ENCODE measurements at regions of chr1 and their contacts with region 1.

Region 1: DNA sequence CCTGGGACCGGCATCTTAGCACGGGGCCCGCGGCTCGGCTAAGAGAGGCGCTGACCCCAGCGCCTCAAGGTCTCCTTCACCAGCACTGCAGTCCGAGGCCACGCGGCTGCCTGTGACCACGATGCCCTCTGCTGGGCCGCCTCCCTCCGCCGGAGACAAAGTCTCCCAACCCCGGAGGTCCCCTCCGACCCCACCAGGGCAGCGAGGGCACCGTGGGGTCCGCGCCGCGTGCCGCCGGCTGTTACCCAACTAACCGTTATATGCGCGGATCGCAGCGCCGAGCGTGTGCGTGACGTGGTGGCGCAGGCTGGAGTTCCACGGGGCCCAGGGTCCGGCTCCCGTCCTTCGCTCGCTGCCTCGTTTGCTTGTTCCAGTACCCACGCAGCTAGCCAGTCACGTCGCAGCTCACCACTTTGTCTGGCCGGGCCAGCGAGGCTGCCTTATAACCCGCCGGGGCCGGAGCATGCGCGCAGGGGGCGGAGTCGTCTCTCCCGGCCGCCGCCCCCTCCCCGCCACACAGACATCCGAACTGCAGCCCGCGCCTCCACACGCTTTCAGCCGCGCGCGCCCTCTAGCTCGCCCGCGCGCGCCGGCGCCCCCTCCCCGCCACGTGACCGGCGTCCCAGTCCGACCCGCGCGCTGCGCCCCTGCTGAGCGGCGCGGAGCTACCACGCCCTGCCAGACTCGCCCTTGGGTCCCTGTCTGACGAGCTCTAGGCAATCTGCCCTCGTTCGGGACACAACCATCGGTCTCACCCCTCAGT is at the start of gene SLC16A1:
- DNase-seq: peak; percentile 93
- ATAC-seq: peak; percentile 71 to 75
- H3K4me3 ChIP-seq: peak within 1 kb of the TSS; percentile 74 to 96 (median 80)
- H3K27ac ChIP-seq: peak within 1 kb of the TSS; percentile 93 to 100 (median 96)
- H3K4me1 ChIP-seq: peaks cover 43 to 50% of the 10 kb centered on the region in 2 donors
- H3K27me3 ChIP-seq: no peaks in the 10 kb centered on the region
- CTCF ChIP-seq: peak in 3 of 5 experiments; percentile 29 to 43 (median 34)
- POLR2A ChIP-seq: peak; percentile 94 to 99
- total RNA-seq, gene SLC16A1: 26.5 to 41.6 (median 36.2) TPM

Region 2: GRCh38 chr1:112524251-112524650 is 431.7 kb before region 1 on chr1:
- in situ Hi-C with region 1: no loop called
- intact Hi-C with region 1: no loop called
- DNase-seq: no peak
- ATAC-seq: no peak
- H3K4me3 ChIP-seq: no peak overlapping the region
- H3K27ac ChIP-seq: no peak overlapping the region
- H3K4me1 ChIP-seq: no peaks in the 10 kb centered on the region
- H3K27me3 ChIP-seq: no peaks in the 10 kb centered on the region
- CTCF ChIP-seq: no peak
- POLR2A ChIP-seq: no peak

Region 3: GRCh38 chr1:112619520-112620376 is 336.2 kb before region 1 on chr1 and contains the start of gene CAPZA1:
- in situ Hi-C with region 1: no loop called
- intact Hi-C with region 1: loop called (anchors 2 kb)
- DNase-seq: peak; percentile 86 to 90
- ATAC-seq: peak; percentile 94
- H3K4me3 ChIP-seq: peak within 1 kb of the TSS; percentile 79 to 100 (median 95)
- H3K27ac ChIP-seq: peak within 1 kb of the TSS; percentile 97 to 99 (median 98)
- H3K4me1 ChIP-seq: peaks cover 33 to 42% of the 10 kb centered on the region in 2 donors
- H3K27me3 ChIP-seq: no peaks in the 10 kb centered on the region
- CTCF ChIP-seq: no peak
- POLR2A ChIP-seq: peak; percentile 85 to 94
- total RNA-seq, gene CAPZA1: 27.1 to 58.1 (median 35.2) TPM

Region 4: DNA sequence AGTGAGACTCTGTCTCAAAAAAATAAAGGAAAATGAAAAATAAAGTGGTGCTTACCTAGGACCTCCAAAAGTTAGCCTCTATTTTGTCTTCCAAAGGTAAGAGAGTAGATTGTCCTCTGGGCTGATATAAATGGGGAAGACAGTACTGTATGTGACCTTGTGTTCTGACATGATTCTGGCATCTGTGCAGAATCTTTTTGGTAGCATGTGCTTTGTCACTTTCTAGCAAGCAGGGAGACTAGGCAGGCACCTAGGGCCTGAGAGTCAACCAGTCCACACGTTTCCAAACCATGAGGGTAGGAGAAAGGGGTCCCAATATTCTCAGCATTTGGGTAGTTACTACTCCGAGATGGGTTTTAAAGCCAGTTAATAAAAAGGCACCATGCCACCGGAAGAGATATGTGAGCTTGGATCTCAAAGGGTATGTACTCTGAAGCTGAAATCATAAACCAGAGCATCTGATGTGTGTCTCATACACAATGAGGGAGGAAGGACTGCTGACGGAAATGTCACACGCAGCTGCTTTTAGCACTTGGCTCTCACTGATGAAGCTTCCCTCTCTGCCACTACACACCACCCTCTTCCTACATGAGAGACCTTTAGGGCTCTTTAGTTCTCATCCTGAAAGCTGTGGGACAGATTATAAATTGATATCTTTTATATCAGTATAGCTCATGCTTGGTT is 27.0 kb after region 1 on chr1:
- in situ Hi-C with region 1: no loop called
- intact Hi-C with region 1: loop called (anchors 2 kb)
- DNase-seq: peak; percentile 75 to 81
- ATAC-seq: peak; percentile 97 to 99
- H3K4me3 ChIP-seq: no peak overlapping the region
- H3K27ac ChIP-seq: peak overlapping the region; percentile 91 to 94 (median 94)
- H3K4me1 ChIP-seq: peaks cover 35 to 37% of the 10 kb centered on the region in 2 donors
- H3K27me3 ChIP-seq: no peaks in the 10 kb centered on the region
- CTCF ChIP-seq: no peak
- POLR2A ChIP-seq: peak; percentile 37 to 46

Region 5: GRCh38 chr1:112998592-112999235 is 42.8 kb after region 1 on chr1:
- in situ Hi-C with region 1: loop called in 1 of 4 experiments (anchors 5 kb)
- intact Hi-C with region 1: loop called (anchors 1 kb)
- DNase-seq: peak; percentile 52 to 79
- ATAC-seq: peak; percentile 63 to 78
- H3K4me3 ChIP-seq: no peak overlapping the region
- H3K27ac ChIP-seq: peak overlapping the region; percentile 91 to 94 (median 94)
- H3K4me1 ChIP-seq: peaks cover 51 to 67% of the 10 kb centered on the region in 2 donors
- H3K27me3 ChIP-seq: no peaks in the 10 kb centered on the region
- CTCF ChIP-seq: no peak
- POLR2A ChIP-seq: no peak

Region 6: GRCh38 chr1:113072757-113073478 is 117.0 kb after region 1 on chr1 and contains the start of gene LRIG2:
- in situ Hi-C with region 1: no loop called
- intact Hi-C with region 1: loop called (anchors 10 kb)
- DNase-seq: peak; percentile 97 to 99
- ATAC-seq: peak; percentile 96 to 99
- H3K4me3 ChIP-seq: peak within 1 kb of the TSS; percentile 69 to 89 (median 79)
- H3K27ac ChIP-seq: peak within 1 kb of the TSS; percentile 87 to 94 (median 91)
- H3K4me1 ChIP-seq: peaks cover 8 to 30% of the 10 kb centered on the region in 2 donors
- H3K27me3 ChIP-seq: no peaks in the 10 kb centered on the region
- CTCF ChIP-seq: peak; percentile 82 to 93 (median 85)
- POLR2A ChIP-seq: peak; percentile 89
- total RNA-seq, gene LRIG2: 4.8 to 9.0 (median 8.9) TPM